ENCODE measurements at regions of chr20 and their contacts with region 1.

Region 1: GRCh38 chr20:35994994-35995453 is 26.6 kb downstream of the CNBD2 start:
- DNase-seq: peak; percentile 85
- H3K4me3 ChIP-seq: no peak overlapping the region
- H3K27ac ChIP-seq: no peak overlapping the region
- H3K4me1 ChIP-seq: no peaks in the 10 kb centered on the region
- H3K27me3 ChIP-seq: peaks cover 0 to under 1% of the 10 kb centered on the region in 2 experiments
- CTCF ChIP-seq: peak; percentile 89 to 93
- POLR2A ChIP-seq: no peak

Region 2: DNA sequence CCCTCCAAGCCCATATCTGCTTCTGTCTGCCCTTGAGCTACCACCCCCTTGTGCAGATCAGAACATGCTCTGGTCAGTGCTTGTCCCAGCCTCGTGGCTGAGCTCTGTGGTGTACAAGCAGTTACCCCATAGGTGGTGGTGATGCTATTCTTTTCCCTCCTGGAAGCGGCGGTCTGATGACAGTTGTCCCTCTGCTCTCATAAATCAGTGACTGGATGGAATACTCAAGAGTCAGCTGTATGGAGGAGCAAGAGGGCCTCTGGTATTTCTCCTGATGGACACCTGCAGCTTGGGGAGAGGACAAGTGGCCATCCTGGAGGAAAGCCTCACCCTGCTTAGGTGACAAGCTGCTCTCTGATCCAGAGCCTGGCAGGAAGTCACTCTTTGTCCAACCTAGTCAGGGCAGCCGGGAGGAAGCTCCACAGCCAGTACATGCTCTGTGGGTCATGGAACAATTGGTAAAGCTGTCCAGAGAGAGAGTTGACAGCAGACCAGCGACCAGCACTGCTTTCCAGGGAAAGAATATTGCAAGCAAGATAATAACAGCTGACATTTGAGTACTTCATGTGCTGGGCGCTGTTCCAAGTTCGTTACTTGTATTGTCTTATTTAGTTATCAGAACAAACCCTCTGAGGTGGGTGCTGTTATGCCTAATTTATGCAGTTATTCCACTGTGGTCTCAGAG is 87.9 kb before region 1 on chr20:
- CTCF ChIA-PET with region 1: no interaction called
- POLR2A ChIA-PET with region 1: no interaction called
- dilution Hi-C with region 1: no loop called
- intact Hi-C with region 1: no loop called
- DNase-seq: peak; percentile 21
- H3K4me3 ChIP-seq: no peak overlapping the region
- H3K27ac ChIP-seq: no peak overlapping the region
- H3K4me1 ChIP-seq: peaks cover 5% of the 10 kb centered on the region
- H3K27me3 ChIP-seq: no peaks in the 10 kb centered on the region
- CTCF ChIP-seq: no peak
- POLR2A ChIP-seq: no peak

Region 3: GRCh38 chr20:35978041-35978513 is 16.9 kb before region 1 on chr20:
- CTCF ChIA-PET with region 1: interaction called, 49 read pairs
- POLR2A ChIA-PET with region 1: no interaction called
- dilution Hi-C with region 1: no loop called
- intact Hi-C with region 1: no loop called
- DNase-seq: no peak
- H3K4me3 ChIP-seq: no peak overlapping the region
- H3K27ac ChIP-seq: no peak overlapping the region
- H3K4me1 ChIP-seq: no peaks in the 10 kb centered on the region
- H3K27me3 ChIP-seq: peaks cover 2 to 8% of the 10 kb centered on the region in 2 experiments
- CTCF ChIP-seq: no peak
- POLR2A ChIP-seq: no peak

Region 4: GRCh38 chr20:36064658-36065426 is 69.8 kb after region 1 on chr20:
- CTCF ChIA-PET with region 1: interaction called, 12 read pairs
- POLR2A ChIA-PET with region 1: no interaction called
- dilution Hi-C with region 1: no loop called
- intact Hi-C with region 1: no loop called
- DNase-seq: peak; percentile 93
- H3K4me3 ChIP-seq: peak overlapping the region in 1 of 3 experiments; percentile 44
- H3K27ac ChIP-seq: peak overlapping the region; percentile 16
- H3K4me1 ChIP-seq: no peaks in the 10 kb centered on the region
- H3K27me3 ChIP-seq: peaks cover 0 to 2% of the 10 kb centered on the region in 2 experiments
- CTCF ChIP-seq: peak in 1 of 2 donors; percentile 3
- POLR2A ChIP-seq: peak; percentile 74

Region 5: DNA sequence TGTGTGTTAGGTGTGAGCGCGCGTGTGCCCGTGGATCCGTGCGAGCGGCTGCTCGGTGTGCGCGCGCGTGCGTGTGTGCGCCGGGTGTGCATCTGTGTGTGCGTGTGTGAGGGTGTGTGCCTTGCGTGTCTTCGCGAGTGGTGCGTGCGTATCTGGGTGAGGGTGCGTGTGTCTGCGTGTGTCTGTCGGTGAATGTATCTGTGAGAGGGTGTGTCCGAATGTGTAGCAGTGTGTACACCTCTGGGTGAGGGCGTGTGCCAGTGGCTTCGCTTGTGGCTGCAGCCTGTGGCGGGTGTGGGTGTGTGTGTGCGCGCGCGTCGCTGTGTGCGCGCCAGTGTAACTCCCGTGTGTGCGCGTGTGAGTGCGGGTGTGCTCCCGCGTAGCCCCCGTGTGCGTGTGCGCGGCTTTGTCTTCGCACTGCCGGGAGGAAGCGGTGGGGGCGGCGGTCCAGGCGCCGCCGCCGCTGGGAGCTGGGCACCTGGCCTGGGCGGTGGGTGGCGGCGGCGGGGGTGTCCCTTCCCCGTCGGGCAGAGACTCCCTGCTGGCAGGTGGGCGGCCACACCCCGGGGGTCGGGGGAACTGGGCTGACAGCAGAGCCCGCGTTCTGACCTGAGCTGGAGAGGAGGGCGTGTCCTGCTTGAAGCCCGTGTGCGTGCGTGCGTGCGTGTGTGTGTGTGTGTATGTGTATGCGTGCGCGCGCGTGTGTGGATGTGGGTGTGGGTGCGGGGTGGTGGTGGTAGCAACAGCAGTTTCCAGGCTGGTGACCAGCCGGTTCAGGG is 98.2 kb after region 1 on chr20:
- CTCF ChIA-PET with region 1: interaction called, 50 read pairs
- POLR2A ChIA-PET with region 1: no interaction called
- dilution Hi-C with region 1: no loop called
- intact Hi-C with region 1: loop called (anchors 5 kb)
- DNase-seq: peak; percentile 24
- H3K4me3 ChIP-seq: peak overlapping the region in 2 of 3 experiments; percentile 1 to 47
- H3K27ac ChIP-seq: no peak overlapping the region
- H3K4me1 ChIP-seq: peaks cover 25% of the 10 kb centered on the region
- H3K27me3 ChIP-seq: peaks cover 6 to 12% of the 10 kb centered on the region in 2 experiments
- CTCF ChIP-seq: no peak
- POLR2A ChIP-seq: peak; percentile 42

Region 6: DNA sequence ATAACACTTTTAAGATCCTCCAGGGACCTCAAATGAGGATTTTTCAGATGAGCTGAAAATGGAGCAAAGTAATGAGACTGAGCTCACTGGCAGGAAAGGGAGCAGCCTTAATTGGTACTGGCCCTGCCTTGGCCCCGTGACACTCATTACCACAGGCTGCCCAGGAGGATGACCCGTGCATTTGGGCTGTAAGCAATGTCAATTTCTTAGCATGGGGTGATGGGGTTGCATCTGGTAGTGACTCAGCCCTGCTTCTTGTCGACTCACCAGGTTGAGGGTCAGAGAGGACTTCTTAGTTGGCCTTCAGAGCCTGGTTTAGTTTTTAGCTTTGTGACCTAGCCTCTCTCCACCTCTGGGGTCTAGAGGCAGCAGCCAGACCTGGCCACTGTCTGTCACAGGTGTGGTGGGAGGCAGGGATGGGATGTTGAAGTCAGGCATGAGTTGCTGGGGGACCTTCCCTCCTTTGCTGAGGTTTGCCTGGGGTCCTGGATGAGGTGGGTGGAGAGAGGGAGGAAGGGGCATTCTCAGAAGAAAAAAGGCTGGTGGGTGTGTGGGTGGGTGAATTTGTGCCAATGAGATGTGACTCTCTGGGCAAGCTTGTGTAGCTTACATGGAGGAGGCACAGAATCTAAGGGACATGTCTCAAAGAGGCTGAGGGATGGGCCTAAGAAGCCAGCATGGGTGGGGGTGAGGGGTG is 133.6 kb after region 1 on chr20:
- CTCF ChIA-PET with region 1: interaction called, 1,267 read pairs
- POLR2A ChIA-PET with region 1: no interaction called
- dilution Hi-C with region 1: no loop called
- intact Hi-C with region 1: no loop called
- DNase-seq: no peak
- H3K4me3 ChIP-seq: no peak overlapping the region
- H3K27ac ChIP-seq: no peak overlapping the region
- H3K4me1 ChIP-seq: no peaks in the 10 kb centered on the region
- H3K27me3 ChIP-seq: peaks cover 0 to 1% of the 10 kb centered on the region in 2 experiments
- CTCF ChIP-seq: no peak
- POLR2A ChIP-seq: no peak